ENCODE measurements at regions of chr12 and their contacts with region 1.

Region 1: DNA sequence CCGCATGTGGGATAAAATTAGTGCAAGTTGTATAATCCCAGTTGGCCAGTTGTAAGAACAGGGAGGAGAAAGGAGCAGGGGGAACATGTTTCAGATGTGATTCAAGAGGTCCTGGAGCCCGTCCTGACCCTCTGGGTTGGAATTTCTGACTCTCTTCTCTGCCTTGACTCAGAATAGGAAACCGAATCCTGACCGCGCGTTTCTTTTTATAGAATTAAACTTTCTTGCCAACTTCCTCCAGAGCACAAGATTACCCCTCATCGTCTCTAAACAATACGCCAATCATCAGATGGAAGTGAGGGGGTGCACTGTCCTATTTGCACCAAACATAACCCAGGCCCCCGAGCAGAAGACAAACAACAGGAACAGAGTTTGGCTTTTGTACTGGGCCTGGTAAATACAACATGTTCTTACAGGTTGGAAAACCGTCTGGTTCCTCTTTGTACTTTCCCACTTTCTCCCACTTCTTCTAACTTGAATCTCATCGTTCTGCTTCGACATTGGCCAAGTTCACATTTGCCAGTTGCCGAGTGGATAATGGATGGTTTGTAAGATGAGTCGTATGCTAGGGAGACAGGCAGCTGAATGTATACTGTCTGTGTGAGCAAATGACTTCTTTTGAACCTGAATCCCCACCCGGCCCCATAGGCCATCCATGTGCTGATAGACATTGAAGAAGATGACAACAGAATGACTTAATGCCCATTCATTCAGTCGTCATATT is 42.6 kb upstream of the MED13L start:
- DNase-seq: no peak
- ATAC-seq: peak; percentile 92

Region 2: GRCh38 chr12:116358893-116359761 is 39.1 kb after region 1 on chr12:
- intact Hi-C with region 1: loop called (anchors 2 kb)
- DNase-seq: peak; percentile 96
- ATAC-seq: peak; percentile 96

Measured in Right ventricle myocardium inferior (tissue), 1 donor.